ENCODE measurements at regions of chr17 and their contacts with region 1.

Region 1: GRCh38 chr17:47789611-47790561 is 31.7 kb downstream of the OSBPL7 start:
- DNase-seq: no peak
- H3K4me3 ChIP-seq: no peak overlapping the region
- H3K27ac ChIP-seq: no peak overlapping the region
- H3K4me1 ChIP-seq: no peaks in the 10 kb centered on the region
- CTCF ChIP-seq: no peak

Region 2: DNA sequence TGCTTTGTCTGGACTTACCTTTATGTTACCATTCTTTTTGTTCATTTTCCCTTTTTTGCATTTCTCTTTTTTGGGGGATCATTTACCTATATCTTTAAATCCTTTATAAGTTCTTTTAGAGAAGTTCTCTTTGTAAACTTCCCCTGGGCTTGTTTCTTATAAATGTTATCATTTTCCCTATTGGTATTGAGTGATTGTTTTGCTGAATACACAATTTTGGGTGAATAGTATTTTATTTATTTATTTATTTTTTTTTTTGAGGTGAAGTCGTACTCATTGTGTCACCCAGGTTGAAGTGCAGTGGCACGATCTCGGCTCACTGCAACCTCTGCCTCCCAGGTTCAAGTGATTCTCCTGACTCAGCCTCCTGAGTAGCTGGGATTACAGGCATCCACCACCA is 38.4 kb before region 1 on chr17:
- CTCF ChIA-PET with region 1: no interaction called
- POLR2A ChIA-PET with region 1: no interaction called
- intact Hi-C with region 1: loop called (anchors 5 kb)
- DNase-seq: no peak
- H3K4me3 ChIP-seq: no peak overlapping the region
- H3K27ac ChIP-seq: no peak overlapping the region
- H3K4me1 ChIP-seq: peaks cover 4% of the 10 kb centered on the region
- CTCF ChIP-seq: no peak

Region 3: GRCh38 chr17:47929218-47930000 is 139.5 kb after region 1 on chr17:
- CTCF ChIA-PET with region 1: no interaction called
- POLR2A ChIA-PET with region 1: no interaction called
- intact Hi-C with region 1: no loop called
- DNase-seq: no peak
- H3K4me3 ChIP-seq: no peak overlapping the region
- H3K27ac ChIP-seq: no peak overlapping the region
- H3K4me1 ChIP-seq: no peaks in the 10 kb centered on the region
- CTCF ChIP-seq: no peak

Measured in OCI-LY7 (cell line).